B cell (primary cell): ENCODE measurements at regions of chr3 and their contacts with region 1.

Region 1: GRCh38 chr3:122415720-122416654 is at the start of gene WDR5B:
- DNase-seq: peak; percentile 100
- ATAC-seq: peak; percentile 88
- H3K4me3 ChIP-seq: peak within 1 kb of the TSS; percentile 74 to 98 (median 83)
- H3K4me3 Mint-ChIP-seq: peak within 1 kb of the TSS; percentile 100
- H3K27ac ChIP-seq: peak within 1 kb of the TSS; percentile 87 to 97
- H3K27ac Mint-ChIP-seq: peak within 1 kb of the TSS; percentile 100
- H3K4me1 ChIP-seq: peaks cover 20 to 26% of the 10 kb centered on the region in 2 donors
- H3K4me1 Mint-ChIP-seq: peaks cover 55% of the 10 kb centered on the region
- H3K27me3 ChIP-seq: no peaks in the 10 kb centered on the region
- H3K27me3 Mint-ChIP-seq: no peaks in the 10 kb centered on the region
- CTCF ChIP-seq: no peak
- total RNA-seq, gene WDR5B: 11.6 and 12.3 TPM in 2 replicates

Region 2: DNA sequence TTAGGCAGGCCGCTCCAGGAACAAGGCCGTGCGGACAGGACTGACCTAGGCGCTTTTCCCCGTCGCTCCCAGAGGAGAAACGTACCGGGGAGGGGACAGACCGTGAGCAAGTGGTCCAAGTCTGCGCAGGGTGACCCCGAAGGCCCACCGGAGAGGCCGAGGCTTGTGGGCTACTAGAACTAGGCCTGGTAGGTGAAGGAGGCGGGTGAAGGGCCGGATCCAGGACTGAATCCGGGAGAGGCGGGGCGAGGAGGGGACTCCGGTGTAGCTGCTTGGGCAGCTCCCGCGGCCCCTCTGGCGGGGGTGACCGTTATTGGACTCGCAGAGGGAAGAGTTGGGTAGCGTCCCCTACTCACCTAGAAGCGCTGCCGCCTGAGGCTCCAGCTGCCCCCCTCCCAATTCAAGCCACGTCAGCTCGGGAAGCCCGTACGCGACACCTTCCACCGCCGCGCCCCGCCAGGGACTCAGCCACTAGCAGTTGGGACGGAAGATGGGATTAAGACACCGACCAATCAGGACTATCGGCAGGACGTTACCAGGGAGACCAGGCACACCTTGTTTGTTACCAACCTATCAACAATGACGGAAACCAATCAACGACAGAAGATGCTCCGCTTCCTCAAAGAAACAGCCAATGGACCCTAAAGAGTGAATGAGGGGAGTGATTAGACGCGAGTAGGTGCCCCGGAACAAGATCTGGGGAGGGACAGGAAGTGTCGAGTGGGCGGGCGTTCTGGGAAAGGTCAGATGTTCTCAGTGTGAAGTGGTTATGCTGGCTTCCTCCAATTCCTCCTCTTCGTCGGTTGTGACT is 666.5 kb before region 1 on chr3 and contains the start of gene GOLGB1:
- CTCF ChIA-PET with region 1: no interaction called
- POLR2A ChIA-PET with region 1: no interaction called
- intact Hi-C with region 1: loop called (anchors 1 kb)
- DNase-seq: peak; percentile 97
- ATAC-seq: peak; percentile 93
- H3K4me3 ChIP-seq: peak within 1 kb of the TSS; percentile 75 to 100 (median 96)
- H3K4me3 Mint-ChIP-seq: no peak within 1 kb of the TSS
- H3K27ac ChIP-seq: peak within 1 kb of the TSS; percentile 90 to 98
- H3K27ac Mint-ChIP-seq: no peak within 1 kb of the TSS
- H3K4me1 ChIP-seq: peaks cover 18 to 19% of the 10 kb centered on the region in 2 donors
- H3K4me1 Mint-ChIP-seq: peaks cover 11% of the 10 kb centered on the region
- H3K27me3 ChIP-seq: no peaks in the 10 kb centered on the region
- H3K27me3 Mint-ChIP-seq: no peaks in the 10 kb centered on the region
- CTCF ChIP-seq: no peak
- total RNA-seq, gene GOLGB1: 58.7 and 64.3 TPM in 2 replicates

Region 3: DNA sequence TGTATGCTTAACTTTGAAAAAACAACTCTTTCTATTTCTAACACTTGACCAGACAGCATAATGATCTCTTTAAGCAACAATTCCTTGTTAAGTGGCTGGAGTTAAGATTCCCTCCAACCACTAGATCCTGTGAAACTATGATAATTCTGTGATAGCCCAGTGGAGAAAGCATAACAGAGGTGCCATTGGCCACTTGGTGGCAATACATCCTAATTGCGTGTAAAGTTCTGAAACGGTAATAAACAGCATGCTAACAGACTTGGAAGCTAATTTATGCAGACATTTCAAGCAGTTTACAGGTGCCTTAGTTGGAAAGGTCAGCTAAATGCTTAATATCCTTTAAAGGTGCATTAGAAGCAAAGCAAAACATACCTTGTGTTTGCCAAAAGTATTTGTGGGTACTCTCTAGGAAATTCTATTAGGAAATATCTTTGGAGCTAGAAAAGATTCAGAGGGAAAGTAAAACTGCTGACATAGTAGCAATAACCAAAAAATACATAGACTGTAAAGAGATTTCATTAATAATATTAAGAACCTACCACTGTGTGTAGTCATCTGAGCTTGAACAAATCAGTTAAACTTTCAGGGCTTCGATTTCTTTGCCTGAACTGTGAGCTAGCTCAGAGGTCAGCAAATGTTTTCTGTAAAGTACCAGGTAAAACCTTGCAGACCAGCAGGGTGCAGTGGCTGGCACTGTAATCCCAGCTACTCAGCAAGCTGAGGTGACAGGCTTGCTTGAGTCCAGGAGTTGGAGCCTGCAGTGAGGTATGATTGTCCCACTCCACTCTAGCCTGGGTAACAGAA is 110.0 kb before region 1 on chr3:
- CTCF ChIA-PET with region 1: no interaction called
- POLR2A ChIA-PET with region 1: no interaction called
- intact Hi-C with region 1: no loop called
- DNase-seq: no peak
- ATAC-seq: no peak
- H3K4me3 ChIP-seq: no peak overlapping the region
- H3K4me3 Mint-ChIP-seq: no peak overlapping the region
- H3K27ac ChIP-seq: no peak overlapping the region
- H3K27ac Mint-ChIP-seq: no peak overlapping the region
- H3K4me1 ChIP-seq: no peaks in the 10 kb centered on the region
- H3K4me1 Mint-ChIP-seq: no peaks in the 10 kb centered on the region
- H3K27me3 ChIP-seq: peaks cover 0 to 2% (median 0%) of the 10 kb centered on the region in 4 experiments
- H3K27me3 Mint-ChIP-seq: no peaks in the 10 kb centered on the region
- CTCF ChIP-seq: no peak

Region 4: DNA sequence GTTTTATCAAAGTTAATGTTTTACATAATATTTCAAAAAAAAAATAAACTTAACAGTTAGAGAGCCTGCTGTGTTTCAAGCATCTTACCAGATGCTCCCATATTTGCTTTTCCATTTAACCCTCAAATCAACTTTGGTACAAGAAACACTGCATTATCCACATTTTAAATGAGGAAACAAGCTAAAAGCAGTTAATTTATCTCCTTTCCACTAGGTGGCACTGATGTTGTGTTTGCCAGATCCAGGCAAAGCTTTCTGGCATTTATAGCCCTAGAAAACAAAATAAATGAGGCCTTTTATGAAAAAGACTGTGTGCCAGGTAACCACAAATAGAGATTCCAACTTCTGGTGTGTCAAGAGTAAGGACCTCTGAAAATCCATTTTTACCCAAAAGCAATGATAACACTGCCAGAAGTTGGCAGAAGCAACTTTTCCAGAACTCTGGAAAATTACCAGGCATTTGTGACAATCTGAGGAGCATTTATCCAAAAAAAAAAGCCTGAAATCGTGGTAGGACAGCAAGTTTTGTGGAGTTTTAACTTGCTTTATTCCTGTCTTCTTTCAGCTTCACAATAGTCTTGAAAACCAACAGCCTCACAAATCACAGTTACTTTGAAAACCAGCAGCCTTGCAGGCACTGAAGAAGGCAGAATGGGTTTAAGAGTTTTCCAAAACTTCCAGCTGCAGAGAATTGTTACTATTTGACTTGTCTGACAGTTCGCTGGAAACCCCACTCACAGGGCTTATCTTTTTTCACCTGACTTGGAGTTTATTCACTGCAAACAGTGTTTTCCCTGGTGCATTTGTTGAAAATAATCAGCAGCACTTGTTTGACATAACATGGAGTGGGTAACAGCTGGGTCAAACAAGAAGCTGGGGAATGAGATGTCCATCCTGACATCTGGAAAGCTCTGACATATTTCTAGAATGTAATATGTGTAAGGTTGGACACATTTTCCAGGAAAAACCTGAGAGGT is 22.8 kb before region 1 on chr3:
- CTCF ChIA-PET with region 1: interaction called, 11 read pairs
- POLR2A ChIA-PET with region 1: no interaction called
- intact Hi-C with region 1: no loop called
- DNase-seq: peak; percentile 66
- ATAC-seq: no peak
- H3K4me3 ChIP-seq: no peak overlapping the region
- H3K4me3 Mint-ChIP-seq: no peak overlapping the region
- H3K27ac ChIP-seq: no peak overlapping the region
- H3K27ac Mint-ChIP-seq: no peak overlapping the region
- H3K4me1 ChIP-seq: no peaks in the 10 kb centered on the region
- H3K4me1 Mint-ChIP-seq: peaks cover 13% of the 10 kb centered on the region
- H3K27me3 ChIP-seq: no peaks in the 10 kb centered on the region
- H3K27me3 Mint-ChIP-seq: no peaks in the 10 kb centered on the region
- CTCF ChIP-seq: peak; percentile 94

Region 5: GRCh38 chr3:122572940-122573412 is 157.0 kb after region 1 on chr3:
- CTCF ChIA-PET with region 1: no interaction called
- POLR2A ChIA-PET with region 1: no interaction called
- intact Hi-C with region 1: loop called (anchors 1 kb)
- DNase-seq: peak; percentile 73
- ATAC-seq: peak; percentile 22
- H3K4me3 ChIP-seq: no peak overlapping the region
- H3K4me3 Mint-ChIP-seq: peak overlapping the region; percentile 20
- H3K27ac ChIP-seq: peak overlapping the region; percentile 66 to 78
- H3K27ac Mint-ChIP-seq: peak overlapping the region; percentile 93
- H3K4me1 ChIP-seq: peaks cover 65 to 73% of the 10 kb centered on the region in 2 donors
- H3K4me1 Mint-ChIP-seq: peaks cover 75% of the 10 kb centered on the region
- H3K27me3 ChIP-seq: no peaks in the 10 kb centered on the region
- H3K27me3 Mint-ChIP-seq: no peaks in the 10 kb centered on the region
- CTCF ChIP-seq: no peak